ENCODE measurements at regions of chr3 and their contacts with region 1.

Region 1: GRCh38 chr3:23136048-23136447 is 67.1 kb upstream of the UBE2E2 start:
- DNase-seq: no peak
- ATAC-seq: no peak
- H3K4me3 ChIP-seq: no peak overlapping the region
- H3K27ac ChIP-seq: no peak overlapping the region
- H3K4me1 ChIP-seq: no peaks in the 10 kb centered on the region
- H3K27me3 ChIP-seq: no peaks in the 10 kb centered on the region
- CTCF ChIP-seq: no peak

Region 2: GRCh38 chr3:22977650-22978289 is 158.3 kb before region 1 on chr3:
- CTCF ChIA-PET with region 1: no interaction called
- POLR2A ChIA-PET with region 1: interaction called, 22 read pairs
- intact Hi-C with region 1: no loop called
- DNase-seq: no peak
- ATAC-seq: no peak
- H3K4me3 ChIP-seq: no peak overlapping the region
- H3K27ac ChIP-seq: no peak overlapping the region
- H3K4me1 ChIP-seq: no peaks in the 10 kb centered on the region
- H3K27me3 ChIP-seq: no peaks in the 10 kb centered on the region
- CTCF ChIP-seq: no peak

Measured in PC-3 (cell line).